SK-MEL-5 (cell line): ENCODE measurements at regions of chr7 and their contacts with region 1.

Region 1: DNA sequence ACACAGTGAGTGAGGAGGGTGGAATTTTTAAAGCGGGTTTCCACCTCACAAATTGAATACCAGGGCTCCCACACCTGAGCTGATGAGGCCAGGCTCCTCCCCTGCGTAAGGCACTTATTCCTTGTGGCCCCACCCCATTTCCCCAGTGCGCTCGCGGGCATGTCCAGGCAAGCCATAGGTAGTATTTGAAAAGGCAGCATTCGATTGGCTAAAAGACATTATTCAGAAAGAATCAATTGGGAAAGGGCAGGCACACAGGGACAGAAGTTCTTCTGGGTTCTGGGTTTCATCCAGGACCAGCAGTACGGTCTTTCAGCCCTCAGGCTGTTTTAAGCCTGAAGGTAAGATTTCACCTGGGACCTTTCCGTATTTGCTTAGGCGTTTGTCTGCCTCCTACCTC is 222.3 kb downstream of the BBS9 start:
- DNase-seq: no peak

Region 2: DNA sequence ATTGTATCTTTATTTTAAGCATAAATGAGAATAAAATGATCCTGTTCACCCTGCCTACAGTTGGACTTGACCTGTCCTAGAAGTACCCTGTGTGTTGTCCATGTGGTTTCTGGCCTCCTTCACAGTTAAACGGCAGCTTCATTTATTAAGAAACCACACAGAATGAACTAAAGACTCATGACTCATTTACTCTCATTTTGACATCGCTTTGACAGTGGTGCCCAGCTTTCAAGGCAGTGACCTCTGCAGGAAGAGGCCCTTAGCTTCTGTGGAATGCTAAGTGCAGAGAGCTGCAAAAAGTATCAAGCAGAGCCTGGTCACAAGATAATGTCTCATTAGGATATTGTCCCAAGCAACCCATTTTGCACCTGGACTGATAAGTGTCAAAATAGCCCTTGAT is 763.1 kb before region 1 on chr7:
- in situ Hi-C with region 1: no loop called
- DNase-seq: peak; percentile 42

Region 3: GRCh38 chr7:33423646-33424020 is 71.9 kb after region 1 on chr7:
- in situ Hi-C with region 1: loop called (anchors 10 kb)
- DNase-seq: peak; percentile 77

Region 4: GRCh38 chr7:33904681-33905388 is 553.1 kb after region 1 on chr7:
- in situ Hi-C with region 1: no loop called
- DNase-seq: no peak